WTC11 (cell line): ENCODE measurements at regions of chr14 and their contacts with region 1.

Region 1: DNA sequence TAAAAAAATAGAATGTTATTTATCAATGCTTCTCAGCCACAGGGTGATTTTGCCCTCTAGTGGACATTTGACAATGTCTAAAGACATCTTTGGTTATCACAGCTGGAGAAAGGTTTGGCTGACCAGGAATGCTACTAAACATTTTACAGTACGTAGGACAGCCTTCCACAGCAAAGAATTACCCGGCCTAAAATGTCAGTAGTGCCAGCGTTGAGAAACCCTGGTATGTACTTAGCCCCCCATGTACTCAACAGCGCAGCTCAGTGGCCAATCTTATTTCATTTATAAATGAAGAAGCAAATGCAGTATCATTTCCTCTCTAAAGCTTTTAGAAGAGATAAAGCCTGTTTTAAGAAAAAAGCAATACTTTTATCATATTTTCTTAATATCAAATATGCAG is 5.8 kb downstream of the MARK3 start:
- DNase-seq: no peak
- ATAC-seq: peak; percentile 43
- H3K4me3 Mint-ChIP-seq: no peak overlapping the region
- H3K27ac Mint-ChIP-seq: no peak overlapping the region
- H3K4me1 Mint-ChIP-seq: peaks cover 39% of the 10 kb centered on the region
- H3K27me3 Mint-ChIP-seq: no peaks in the 10 kb centered on the region
- CTCF ChIP-seq: no peak; the same call in 1 of the 2 replicates

Region 2: GRCh38 chr14:103271189-103271588 is 119.9 kb before region 1 on chr14:
- CTCF ChIA-PET with region 1: no interaction called
- POLR2A ChIA-PET with region 1: no interaction called
- DNase-seq: no peak
- ATAC-seq: no peak
- H3K4me3 Mint-ChIP-seq: no peak overlapping the region
- H3K27ac Mint-ChIP-seq: no peak overlapping the region
- H3K4me1 Mint-ChIP-seq: peaks cover 8% of the 10 kb centered on the region
- H3K27me3 Mint-ChIP-seq: peaks cover 52% of the 10 kb centered on the region
- CTCF ChIP-seq: no peak

Region 3: GRCh38 chr14:103346286-103346685 is 44.8 kb before region 1 on chr14:
- CTCF ChIA-PET with region 1: interaction called, 18 read pairs
- POLR2A ChIA-PET with region 1: no interaction called
- DNase-seq: no peak
- ATAC-seq: no peak
- H3K4me3 Mint-ChIP-seq: no peak overlapping the region
- H3K27ac Mint-ChIP-seq: no peak overlapping the region
- H3K4me1 Mint-ChIP-seq: peaks cover 19% of the 10 kb centered on the region
- H3K27me3 Mint-ChIP-seq: no peaks in the 10 kb centered on the region
- CTCF ChIP-seq: no peak

Region 4: DNA sequence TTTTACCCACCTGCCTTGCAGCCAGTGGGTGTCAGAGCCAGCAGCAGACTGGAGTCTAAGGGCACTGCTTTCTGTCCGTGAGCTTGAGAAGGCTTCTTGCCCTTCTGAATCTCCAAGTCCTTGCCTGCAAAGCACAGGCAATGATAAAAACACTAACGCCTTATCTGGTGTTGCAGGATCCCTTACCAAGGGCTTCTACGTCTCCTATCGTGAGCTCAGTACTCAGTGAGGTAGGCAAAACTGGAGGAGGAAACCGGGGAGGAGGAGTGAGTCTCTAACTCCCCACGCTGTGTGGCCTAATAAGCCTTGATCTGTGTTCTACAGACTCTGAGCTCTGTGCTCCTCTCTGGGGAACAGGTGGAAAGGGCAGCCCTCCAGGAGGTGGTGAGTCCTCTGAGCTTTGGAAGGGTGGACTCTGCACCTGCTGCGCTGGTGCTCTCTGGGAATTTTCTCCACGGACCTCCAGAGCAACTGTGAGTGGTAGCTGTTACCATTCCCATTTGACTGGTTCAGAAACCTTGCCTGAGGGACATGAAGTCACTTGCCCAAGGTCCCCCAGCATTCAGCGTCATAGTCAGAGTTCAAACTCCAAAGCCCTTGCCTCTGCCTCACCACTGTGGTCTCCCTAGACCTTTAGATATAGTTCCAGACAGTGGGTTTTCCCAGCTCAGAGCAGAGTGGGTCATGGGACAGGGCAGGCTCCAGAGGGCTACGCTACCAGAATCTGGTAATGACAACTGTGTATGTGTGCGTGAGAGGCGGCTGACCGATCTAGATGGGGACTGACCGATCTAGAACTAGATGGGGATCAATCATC is 12.8 kb before region 1 on chr14:
- CTCF ChIA-PET with region 1: interaction called, 14 read pairs
- POLR2A ChIA-PET with region 1: no interaction called
- DNase-seq: no peak
- ATAC-seq: no peak; the same call in 1 of the 2 replicates
- H3K4me3 Mint-ChIP-seq: no peak overlapping the region
- H3K27ac Mint-ChIP-seq: no peak overlapping the region
- H3K4me1 Mint-ChIP-seq: peaks cover 6% of the 10 kb centered on the region; the same call in 1 of the 2 replicates
- H3K27me3 Mint-ChIP-seq: peaks cover 7% of the 10 kb centered on the region
- CTCF ChIP-seq: no peak

Region 5: GRCh38 chr14:103427485-103428443 is 36.7 kb after region 1 on chr14:
- CTCF ChIA-PET with region 1: no interaction called
- POLR2A ChIA-PET with region 1: no interaction called
- DNase-seq: peak; percentile 19
- ATAC-seq: peak; percentile 92
- H3K4me3 Mint-ChIP-seq: no peak overlapping the region
- H3K27ac Mint-ChIP-seq: peak overlapping the region; percentile 90
- H3K4me1 Mint-ChIP-seq: peaks cover 37% of the 10 kb centered on the region
- H3K27me3 Mint-ChIP-seq: no peaks in the 10 kb centered on the region
- CTCF ChIP-seq: no peak

Region 6: GRCh38 chr14:103444837-103445524 is 53.9 kb after region 1 on chr14:
- CTCF ChIA-PET with region 1: interaction called, 13 read pairs
- POLR2A ChIA-PET with region 1: no interaction called
- DNase-seq: no peak
- ATAC-seq: no peak; the same call in 1 of the 2 replicates
- H3K4me3 Mint-ChIP-seq: no peak overlapping the region
- H3K27ac Mint-ChIP-seq: peak overlapping the region; percentile 63; the same call in 1 of the 2 replicates
- H3K4me1 Mint-ChIP-seq: peaks cover 35% of the 10 kb centered on the region
- H3K27me3 Mint-ChIP-seq: no peaks in the 10 kb centered on the region
- CTCF ChIP-seq: no peak